Kidney (tissue), 22 donors: ENCODE measurements at regions of chr1 and their contacts with region 1.

Region 1: GRCh38 chr1:53393325-53393792 is 65.5 kb upstream of the LRP8 start:
- DNase-seq: peak; percentile 84 to 93 (median 90)
- H3K4me3 ChIP-seq: no peak overlapping the region
- H3K27ac ChIP-seq: no peak overlapping the region
- H3K4me1 ChIP-seq: no peaks in the 10 kb centered on the region
- H3K27me3 ChIP-seq: no peaks in the 10 kb centered on the region
- CTCF ChIP-seq: peak; percentile 93

Region 2: GRCh38 chr1:53278201-53278725 is 115.1 kb before region 1 on chr1:
- intact Hi-C with region 1: loop called (anchors 2 kb)
- DNase-seq: peak; percentile 46 to 77 (median 54)
- H3K4me3 ChIP-seq: no peak overlapping the region
- H3K27ac ChIP-seq: no peak overlapping the region
- H3K4me1 ChIP-seq: no peaks in the 10 kb centered on the region
- H3K27me3 ChIP-seq: no peaks in the 10 kb centered on the region
- CTCF ChIP-seq: peak; percentile 80